ENCODE measurements at regions of chr2 and their contacts with region 1.

Region 1: GRCh38 chr2:28349546-28350165 is 43.0 kb upstream of the FOSL2 start:
- DNase-seq: no peak
- H3K4me3 ChIP-seq: no peak overlapping the region
- H3K27me3 ChIP-seq: no peaks in the 10 kb centered on the region
- CTCF ChIP-seq: no peak

Region 2: GRCh38 chr2:27890146-27890923 is 459.3 kb before region 1 on chr2 and contains the starts of genes BABAM2 and RBKS:
- CTCF ChIA-PET with region 1: no interaction called
- POLR2A ChIA-PET with region 1: interaction called, 15 read pairs
- DNase-seq: no peak
- H3K4me3 ChIP-seq: peak within 1 kb of the TSS; percentile 75
- H3K27me3 ChIP-seq: no peaks in the 10 kb centered on the region
- CTCF ChIP-seq: no peak
- polyA plus RNA-seq, gene BABAM2: 32.6 and 47.4 TPM in 2 replicates
- polyA plus RNA-seq, gene RBKS: 1.8 and 2.2 TPM in 2 replicates

Region 3: DNA sequence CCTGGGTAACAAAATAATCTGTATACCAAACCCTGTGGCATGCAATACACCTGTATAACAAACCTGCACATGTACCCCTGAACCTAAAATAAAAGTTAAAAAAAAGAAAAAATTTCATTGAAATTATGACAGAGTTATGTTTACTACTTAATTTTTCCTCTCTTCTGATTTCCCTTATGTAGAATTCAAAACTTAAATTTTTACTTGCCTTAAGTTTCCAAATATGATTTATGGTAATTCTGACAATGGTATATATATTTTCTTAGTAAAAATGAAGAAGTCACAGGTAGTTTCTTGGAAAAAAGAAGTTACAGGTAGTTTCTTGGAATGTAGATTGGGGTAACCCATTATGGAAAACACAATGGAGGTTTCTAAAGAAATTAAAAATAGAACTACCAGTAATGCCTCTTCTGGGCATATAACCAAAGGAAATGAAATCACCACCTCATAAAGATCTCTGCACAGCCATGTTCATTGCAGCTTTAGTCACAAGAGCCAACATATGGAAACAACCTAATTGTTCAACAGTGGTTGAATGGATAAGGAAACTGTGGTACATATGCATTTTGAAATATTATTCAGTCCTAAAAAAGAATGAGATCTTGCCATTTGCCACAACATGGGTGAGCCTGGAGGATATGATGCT is 294.2 kb before region 1 on chr2:
- CTCF ChIA-PET with region 1: no interaction called
- POLR2A ChIA-PET with region 1: no interaction called
- DNase-seq: no peak
- H3K4me3 ChIP-seq: no peak overlapping the region
- H3K27me3 ChIP-seq: no peaks in the 10 kb centered on the region
- CTCF ChIP-seq: no peak

Region 4: GRCh38 chr2:28333606-28334526 is 15.8 kb before region 1 on chr2:
- CTCF ChIA-PET with region 1: no interaction called
- POLR2A ChIA-PET with region 1: no interaction called
- DNase-seq: no peak
- H3K4me3 ChIP-seq: no peak overlapping the region
- H3K27me3 ChIP-seq: no peaks in the 10 kb centered on the region
- CTCF ChIP-seq: no peak

Measured in BJ (cell line).